Gastrocnemius medialis (tissue), 4 donors: ENCODE measurements at regions of chr3 and their contacts with region 1.

Region 1: DNA sequence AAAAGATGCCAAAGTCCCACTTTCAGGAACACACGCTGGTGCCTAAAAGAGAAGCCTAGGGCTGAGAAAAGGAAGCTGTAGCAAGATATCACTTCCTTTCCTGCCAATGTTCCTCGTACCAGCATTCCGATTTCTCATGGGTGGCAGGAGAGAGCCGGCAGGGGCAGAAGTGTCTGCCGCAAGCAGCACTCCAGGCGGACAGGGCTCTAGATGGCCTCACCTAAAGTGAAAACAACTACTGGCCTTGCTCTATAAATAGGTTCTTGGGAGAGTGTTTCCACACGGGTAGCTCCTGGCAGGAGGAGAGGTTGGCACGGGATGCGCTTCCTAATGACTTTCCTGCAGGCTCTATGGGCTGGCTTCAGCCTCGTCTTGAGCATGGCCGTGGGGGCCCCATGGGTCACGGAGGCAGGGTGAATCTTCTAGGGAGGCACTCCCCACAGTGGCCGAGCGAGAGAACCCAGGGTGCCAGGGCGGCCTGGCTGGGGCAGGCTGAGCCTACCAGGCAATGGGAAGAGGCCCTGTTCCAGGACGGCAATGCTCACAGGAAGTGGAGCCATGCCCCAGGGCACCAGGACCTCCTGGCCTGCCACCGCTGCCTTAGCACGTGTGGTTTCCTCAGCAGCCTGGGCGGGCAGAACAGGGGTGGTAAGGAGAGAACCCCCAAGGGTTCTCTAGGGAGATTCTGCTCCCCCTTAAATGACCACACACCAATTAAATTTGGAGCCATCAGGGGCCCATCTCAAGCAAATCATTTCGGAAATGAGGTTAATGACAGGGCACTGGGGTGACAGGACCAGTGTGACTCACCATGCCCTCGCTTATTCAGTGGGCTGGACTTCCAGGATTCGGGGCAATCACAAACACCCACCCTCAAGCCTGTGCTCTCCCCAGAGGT is 14.6 kb upstream of the DUSP7 start:
- DNase-seq: peak; percentile 72 to 90
- ATAC-seq: peak; percentile 98
- H3K4me3 ChIP-seq: peak overlapping the region in 1 of 4 donors; percentile 19
- H3K27ac ChIP-seq: peak overlapping the region; percentile 84 to 99 (median 92)
- H3K4me1 ChIP-seq: peaks cover 19 to 27% of the 10 kb centered on the region in 2 donors
- H3K27me3 ChIP-seq: no peaks in the 10 kb centered on the region
- CTCF ChIP-seq: peak in 3 of 5 experiments; percentile 14 to 29 (median 25)
- POLR2A ChIP-seq: peak; percentile 57

Region 2: DNA sequence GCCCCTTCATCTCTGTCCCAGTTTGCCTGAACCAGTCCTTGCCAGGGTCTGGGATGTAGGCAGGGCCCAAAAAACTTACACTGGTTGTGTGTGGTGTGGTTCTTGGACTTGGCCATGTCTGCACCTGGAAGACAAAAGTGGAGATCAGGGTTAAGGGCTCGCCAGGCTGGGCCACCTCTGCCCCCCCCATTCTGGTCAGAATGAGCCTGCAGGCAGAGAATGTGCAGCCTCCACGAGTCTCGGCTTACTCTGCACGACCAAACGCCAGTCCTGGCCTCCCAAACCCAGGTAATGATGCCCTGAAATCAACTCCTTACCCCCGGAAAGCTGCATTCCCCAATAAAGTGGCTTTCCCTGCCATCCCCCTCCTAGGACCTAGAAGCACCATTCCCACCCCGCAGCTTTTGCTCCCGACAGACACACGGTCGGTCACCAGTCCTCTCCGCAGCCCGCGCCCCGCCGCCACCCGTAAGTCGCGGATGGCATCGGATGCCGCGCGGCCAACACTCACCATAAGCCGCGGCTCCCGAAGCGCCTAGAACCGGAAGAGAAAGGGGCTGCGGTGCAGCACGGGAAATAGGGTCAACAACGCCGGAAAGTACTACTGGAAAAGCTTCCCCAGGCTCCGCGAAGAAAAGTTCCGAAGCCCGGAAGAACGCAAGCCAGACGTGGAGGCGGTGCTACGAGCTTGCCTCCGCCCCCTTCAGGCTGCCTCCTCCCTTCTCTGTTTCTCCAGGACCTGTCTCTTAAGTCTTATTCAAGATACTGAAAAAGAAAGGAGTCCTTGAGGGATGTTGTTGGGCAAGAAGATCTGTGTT is 75.4 kb before region 1 on chr3 and contains the start of gene RPL29:
- in situ Hi-C with region 1: no loop called
- intact Hi-C with region 1: loop called (anchors 5 kb)
- DNase-seq: peak; percentile 85 to 92
- ATAC-seq: peak; percentile 99
- H3K4me3 ChIP-seq: peak within 1 kb of the TSS; percentile 80 to 91 (median 87)
- H3K27ac ChIP-seq: peak within 1 kb of the TSS; percentile 84 to 89 (median 88)
- H3K4me1 ChIP-seq: peaks cover 14 to 26% of the 10 kb centered on the region in 2 donors
- H3K27me3 ChIP-seq: no peaks in the 10 kb centered on the region
- CTCF ChIP-seq: peak in 3 of 5 experiments; percentile 43 to 50 (median 44)
- POLR2A ChIP-seq: peak; percentile 75 to 85
- total RNA-seq, gene RPL29: 1,885 to 2,483 (median 2,154) TPM

Region 3: DNA sequence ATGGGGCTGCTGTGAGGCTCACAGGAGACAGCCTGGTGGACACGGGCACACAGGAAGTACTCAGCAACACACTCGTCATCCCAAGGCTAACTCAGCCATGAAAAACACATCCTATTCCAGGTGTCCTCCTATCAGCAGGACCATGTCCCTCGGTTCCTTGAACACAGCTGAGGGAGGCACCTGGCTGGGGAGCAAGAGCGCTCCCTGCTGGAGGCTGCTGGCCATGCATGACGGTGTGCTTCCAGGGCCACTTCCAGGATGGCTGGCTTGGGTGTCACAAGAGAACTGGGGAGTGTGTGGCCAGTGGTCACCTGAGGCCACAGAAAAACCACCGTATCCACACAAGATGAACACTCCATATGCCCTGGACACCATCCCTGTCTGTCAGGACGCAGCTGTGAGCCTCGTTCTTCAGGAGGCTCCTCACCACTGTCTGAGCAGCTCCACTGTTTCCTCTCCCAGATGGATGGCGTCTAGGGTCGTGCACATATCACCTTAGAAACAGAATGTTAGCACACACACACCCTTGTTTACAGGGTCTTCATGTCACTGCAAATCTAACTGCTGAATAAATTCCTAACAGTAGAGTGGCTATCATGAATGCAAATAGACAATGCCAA is 52.2 kb after region 1 on chr3:
- in situ Hi-C with region 1: no loop called
- intact Hi-C with region 1: loop called (anchors 2 kb)
- DNase-seq: peak; percentile 33 to 60
- ATAC-seq: peak; percentile 74 to 89
- H3K4me3 ChIP-seq: no peak overlapping the region
- H3K27ac ChIP-seq: peak overlapping the region in 3 of 4 donors; percentile 54 to 68 (median 67)
- H3K4me1 ChIP-seq: peaks cover 4 to 20% of the 10 kb centered on the region in 2 donors
- H3K27me3 ChIP-seq: no peaks in the 10 kb centered on the region
- CTCF ChIP-seq: peak; percentile 88 to 95 (median 93)
- POLR2A ChIP-seq: no peak